ENCODE measurements at regions of chr6 and their contacts with region 1.

Region 1: DNA sequence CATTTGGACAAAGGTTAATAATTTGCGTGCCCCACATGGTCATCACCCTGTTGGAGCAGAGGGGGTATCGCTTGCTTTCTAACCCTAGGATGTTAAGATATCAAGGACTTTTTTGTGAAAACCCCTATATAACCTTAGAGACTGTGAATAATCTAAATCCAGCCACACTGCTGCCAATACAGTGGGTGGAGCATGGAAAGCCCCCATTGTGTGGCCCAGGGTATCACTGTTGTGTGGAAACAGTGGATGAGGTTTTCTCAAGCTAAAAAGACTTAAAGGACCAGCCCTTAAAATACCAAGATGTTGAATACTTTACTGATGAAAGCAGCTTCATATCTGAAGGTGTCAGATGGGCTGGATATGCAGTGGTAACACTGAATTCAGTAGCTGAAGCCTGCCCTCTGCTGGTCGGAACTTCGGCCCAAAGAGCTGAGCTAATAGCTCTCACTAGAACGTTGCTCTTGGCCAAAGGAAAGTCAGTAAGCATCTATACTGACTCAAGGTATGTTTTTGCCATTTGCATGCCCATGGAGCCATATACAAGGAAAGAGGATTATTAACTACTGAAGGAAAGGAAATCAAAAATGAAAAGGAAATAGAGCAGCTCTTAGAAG is 695.2 kb downstream of the PHF3 start:
- DNase-seq: no peak
- CTCF ChIP-seq: peak; percentile 79

Region 2: GRCh38 chr6:63584125-63584514 is 746.7 kb before region 1 on chr6:
- CTCF ChIA-PET with region 1: no interaction called
- POLR2A ChIA-PET with region 1: no interaction called
- DNase-seq: no peak
- CTCF ChIP-seq: no peak

Region 3: GRCh38 chr6:63923139-63923739 is 407.6 kb before region 1 on chr6:
- CTCF ChIA-PET with region 1: interaction called, 63 read pairs
- POLR2A ChIA-PET with region 1: no interaction called
- DNase-seq: peak; percentile 43
- CTCF ChIP-seq: peak; percentile 61

Region 4: GRCh38 chr6:64012351-64013001 is 318.3 kb before region 1 on chr6:
- CTCF ChIA-PET with region 1: interaction called, 24 read pairs
- POLR2A ChIA-PET with region 1: no interaction called
- DNase-seq: peak; percentile 21
- CTCF ChIP-seq: peak; percentile 46

Region 5: DNA sequence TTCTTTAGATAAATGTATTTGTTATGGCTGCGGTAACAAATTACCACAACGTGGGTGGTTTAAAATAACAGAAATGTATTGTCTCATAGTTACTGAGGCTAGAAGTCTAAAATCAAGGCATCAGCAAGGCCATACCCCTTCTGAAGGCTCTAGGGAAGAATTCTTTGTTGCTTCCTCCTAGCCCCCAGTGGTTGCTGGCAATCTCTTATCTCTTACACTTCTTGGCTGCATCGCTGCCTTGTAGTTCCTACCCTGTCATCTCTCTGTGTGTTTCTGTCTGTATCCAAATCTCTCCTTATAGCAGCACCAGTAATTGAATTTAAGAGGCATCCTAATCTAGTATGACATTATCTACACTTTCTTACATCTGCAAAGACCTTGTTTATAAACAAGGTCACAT is 160.5 kb before region 1 on chr6:
- CTCF ChIA-PET with region 1: no interaction called
- POLR2A ChIA-PET with region 1: no interaction called
- DNase-seq: no peak
- CTCF ChIP-seq: no peak

Region 6: GRCh38 chr6:64280569-64280968 is 50.2 kb before region 1 on chr6:
- CTCF ChIA-PET with region 1: interaction called, 38 read pairs
- POLR2A ChIA-PET with region 1: no interaction called
- DNase-seq: no peak
- CTCF ChIP-seq: peak; percentile 49

Measured in GM10248 (cell line).